Activated B cell treated with CpG ODN at 0.5 μM for 24 hours (primary cell): ENCODE measurements at regions of chr7 and their contacts with region 1.

Region 1: DNA sequence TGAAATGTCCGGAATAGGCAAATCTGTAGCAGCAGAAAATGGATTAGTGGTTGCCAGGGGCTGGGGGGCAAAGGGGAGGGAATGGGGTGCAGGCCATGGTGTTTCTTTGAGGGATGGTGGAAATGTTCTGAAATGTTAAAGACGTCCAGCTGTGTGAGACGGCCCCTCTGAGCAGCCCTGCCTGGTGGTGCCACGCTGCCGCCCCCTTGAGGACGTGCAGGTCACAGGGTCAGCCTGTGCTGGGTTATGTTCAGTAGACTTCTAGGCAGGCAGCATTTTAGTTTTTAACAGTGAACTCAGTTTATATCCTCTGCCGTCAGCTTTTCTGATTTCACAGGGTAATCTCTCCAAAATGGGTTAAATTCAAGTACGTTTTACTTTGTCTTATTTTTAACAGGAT is 9.4 kb downstream of the NUB1 start:
- DNase-seq: peak; percentile 35
- ATAC-seq: peak; percentile 13
- H3K4me3 Mint-ChIP-seq: no peak overlapping the region
- H3K27ac Mint-ChIP-seq: peak overlapping the region; percentile 94
- H3K4me1 Mint-ChIP-seq: peaks cover 51% of the 10 kb centered on the region
- H3K27me3 Mint-ChIP-seq: no peaks in the 10 kb centered on the region
- CTCF ChIP-seq: no peak

Region 2: DNA sequence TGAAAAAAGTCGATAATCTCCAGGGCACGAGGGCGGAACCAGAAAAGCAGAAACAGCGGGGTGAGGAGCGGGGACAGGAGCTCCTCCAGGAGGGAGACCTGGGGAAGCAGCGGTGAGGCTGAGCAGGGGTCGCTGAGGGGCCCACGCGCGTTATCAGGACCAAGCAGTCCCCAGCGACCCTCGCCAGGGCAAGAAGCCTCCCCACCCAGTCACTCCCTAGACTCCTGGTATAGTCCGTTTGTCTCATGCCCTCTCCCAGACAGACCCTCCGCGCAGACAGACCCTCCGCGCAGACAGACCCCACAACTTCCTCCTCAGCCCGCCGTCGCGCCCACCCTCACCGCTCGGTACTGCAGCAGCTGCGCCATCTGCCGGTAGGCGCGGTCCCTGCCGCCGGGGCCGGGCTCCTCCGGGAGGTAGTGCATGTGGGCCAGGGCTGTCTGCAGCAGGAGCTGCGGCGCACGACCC is 333.0 kb before region 1 on chr7:
- CTCF ChIA-PET with region 1: no interaction called
- POLR2A ChIA-PET with region 1: no interaction called
- intact Hi-C with region 1: loop called (anchors 5 kb)
- DNase-seq: peak; percentile 83
- ATAC-seq: peak; percentile 72
- H3K4me3 Mint-ChIP-seq: peak overlapping the region; percentile 85
- H3K27ac Mint-ChIP-seq: no peak overlapping the region
- H3K4me1 Mint-ChIP-seq: peaks cover 45% of the 10 kb centered on the region
- H3K27me3 Mint-ChIP-seq: peaks cover 32% of the 10 kb centered on the region
- CTCF ChIP-seq: peak; percentile 78

Region 3: DNA sequence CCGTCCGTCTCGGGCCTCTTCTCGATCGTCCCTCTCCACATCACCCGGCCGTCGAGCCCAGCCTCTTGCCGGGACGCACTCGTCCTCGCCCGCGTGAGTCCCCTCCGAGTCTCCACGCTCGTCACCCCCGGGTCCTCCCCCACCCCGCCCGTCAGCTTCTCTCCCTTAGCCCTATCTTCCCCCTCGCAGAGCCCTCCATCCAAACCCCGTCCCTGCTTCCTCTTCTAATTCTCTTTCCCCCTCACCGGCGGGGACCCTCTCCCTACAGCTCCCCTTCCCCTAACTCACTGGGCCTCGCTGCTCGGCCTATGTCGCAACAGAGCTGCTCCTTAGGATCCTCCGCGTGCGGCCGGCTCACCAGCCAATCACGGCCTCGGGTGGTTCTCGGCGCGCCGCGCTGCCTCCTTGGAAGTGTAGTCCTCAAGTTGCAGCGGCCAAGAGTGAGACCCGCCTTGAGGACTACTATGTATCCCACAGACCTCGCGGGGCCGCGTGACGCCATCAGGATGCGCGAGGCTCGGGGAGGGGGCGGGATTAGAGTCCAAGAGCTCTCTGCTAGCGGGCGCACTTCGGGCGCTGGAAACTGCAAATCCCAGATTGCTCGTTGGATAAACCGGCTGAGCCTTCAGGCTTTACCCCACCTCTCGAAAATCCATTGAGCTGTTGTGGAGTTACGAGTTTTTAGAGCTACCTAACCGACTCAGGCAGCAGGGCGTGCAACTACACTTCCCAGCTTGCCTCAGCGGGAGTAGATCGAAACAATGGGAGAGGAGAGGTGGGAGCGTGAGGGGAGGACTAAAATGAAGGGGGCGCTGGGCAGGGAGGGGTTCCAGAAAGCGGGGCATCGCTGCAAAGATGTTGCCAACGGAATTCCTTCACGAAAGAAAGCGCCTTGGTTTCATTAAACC is 123.9 kb before region 1 on chr7 and contains the start of gene ABCF2:
- CTCF ChIA-PET with region 1: no interaction called
- POLR2A ChIA-PET with region 1: interaction called, 3 read pairs
- intact Hi-C with region 1: loop called (anchors 1 kb)
- DNase-seq: peak; percentile 97
- ATAC-seq: peak; percentile 99
- H3K4me3 Mint-ChIP-seq: peak within 1 kb of the TSS; percentile 99
- H3K27ac Mint-ChIP-seq: peak within 1 kb of the TSS; percentile 91
- H3K4me1 Mint-ChIP-seq: peaks cover 41% of the 10 kb centered on the region
- H3K27me3 Mint-ChIP-seq: no peaks in the 10 kb centered on the region
- CTCF ChIP-seq: no peak
- total RNA-seq, gene ABCF2: 47.3 and 52.4 TPM in 2 replicates

Region 4: GRCh38 chr7:151315038-151315655 is 35.9 kb before region 1 on chr7:
- CTCF ChIA-PET with region 1: interaction called, 205 read pairs
- POLR2A ChIA-PET with region 1: interaction called, 25 read pairs
- intact Hi-C with region 1: loop called (anchors 1 kb)
- DNase-seq: peak; percentile 41
- ATAC-seq: peak; percentile 87
- H3K4me3 Mint-ChIP-seq: no peak overlapping the region
- H3K27ac Mint-ChIP-seq: no peak overlapping the region
- H3K4me1 Mint-ChIP-seq: peaks cover 2% of the 10 kb centered on the region
- H3K27me3 Mint-ChIP-seq: no peaks in the 10 kb centered on the region
- CTCF ChIP-seq: no peak

Region 5: GRCh38 chr7:151368136-151368571 is 17.1 kb after region 1 on chr7:
- CTCF ChIA-PET with region 1: interaction called, 24 read pairs
- POLR2A ChIA-PET with region 1: interaction called, 3 read pairs
- intact Hi-C with region 1: loop called (anchors 1 kb)
- DNase-seq: peak; percentile 64
- ATAC-seq: peak; percentile 100
- H3K4me3 Mint-ChIP-seq: no peak overlapping the region
- H3K27ac Mint-ChIP-seq: no peak overlapping the region
- H3K4me1 Mint-ChIP-seq: peaks cover 6% of the 10 kb centered on the region
- H3K27me3 Mint-ChIP-seq: no peaks in the 10 kb centered on the region
- CTCF ChIP-seq: peak; percentile 37

Region 6: GRCh38 chr7:151400626-151401315 is 49.7 kb after region 1 on chr7:
- CTCF ChIA-PET with region 1: no interaction called
- POLR2A ChIA-PET with region 1: no interaction called
- intact Hi-C with region 1: loop called (anchors 1 kb)
- DNase-seq: peak; percentile 55
- ATAC-seq: peak; percentile 96
- H3K4me3 Mint-ChIP-seq: peak overlapping the region; percentile 36
- H3K27ac Mint-ChIP-seq: peak overlapping the region; percentile 81
- H3K4me1 Mint-ChIP-seq: peaks cover 26% of the 10 kb centered on the region
- H3K27me3 Mint-ChIP-seq: no peaks in the 10 kb centered on the region
- CTCF ChIP-seq: no peak

Region 7: GRCh38 chr7:151411551-151411950 is 60.5 kb after region 1 on chr7:
- CTCF ChIA-PET with region 1: no interaction called
- POLR2A ChIA-PET with region 1: no interaction called
- intact Hi-C with region 1: no loop called
- DNase-seq: no peak
- ATAC-seq: peak; percentile 49
- H3K4me3 Mint-ChIP-seq: peak overlapping the region; percentile 41
- H3K27ac Mint-ChIP-seq: no peak overlapping the region
- H3K4me1 Mint-ChIP-seq: peaks cover 25% of the 10 kb centered on the region
- H3K27me3 Mint-ChIP-seq: peaks cover 46% of the 10 kb centered on the region
- CTCF ChIP-seq: no peak

Region 8: DNA sequence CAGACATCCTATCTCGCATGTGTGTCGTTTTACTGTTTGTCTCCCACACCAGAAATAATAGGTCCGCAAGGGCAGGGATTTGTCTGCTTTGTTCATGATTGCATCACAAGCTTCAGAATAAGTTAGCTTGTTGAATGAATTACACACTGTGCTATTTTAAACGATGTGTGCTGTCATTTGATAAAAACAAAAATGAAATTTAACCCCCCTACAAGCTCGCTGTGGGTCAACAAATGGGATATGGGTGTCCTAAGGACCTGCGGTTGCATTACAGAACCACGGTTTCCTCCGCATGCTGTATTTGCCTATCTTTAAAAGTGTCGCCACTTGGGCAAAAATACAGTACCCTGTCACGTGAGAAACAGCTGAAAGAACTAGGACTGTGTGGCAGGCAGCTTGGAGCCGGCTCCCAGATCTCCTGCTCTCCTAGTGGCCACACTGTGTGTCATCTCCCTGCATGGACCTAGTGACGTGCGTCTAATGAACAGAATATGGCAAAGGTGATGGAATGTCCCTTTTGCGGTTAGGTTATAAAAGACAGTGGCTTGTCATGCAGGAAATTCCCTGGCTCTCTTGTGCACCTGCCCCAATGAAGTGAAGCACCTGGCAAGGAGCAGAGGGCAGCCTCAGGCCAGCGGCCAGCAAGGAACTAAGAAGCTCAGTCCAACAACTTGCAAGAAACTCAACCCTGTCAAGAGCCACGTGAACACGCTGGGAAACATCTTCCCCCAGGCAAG is 121.8 kb after region 1 on chr7:
- CTCF ChIA-PET with region 1: no interaction called
- POLR2A ChIA-PET with region 1: no interaction called
- intact Hi-C with region 1: no loop called
- DNase-seq: no peak
- ATAC-seq: peak; percentile 38
- H3K4me3 Mint-ChIP-seq: peak overlapping the region; percentile 62
- H3K27ac Mint-ChIP-seq: peak overlapping the region; percentile 57
- H3K4me1 Mint-ChIP-seq: peaks cover 27% of the 10 kb centered on the region
- H3K27me3 Mint-ChIP-seq: no peaks in the 10 kb centered on the region
- CTCF ChIP-seq: no peak

Region 9: DNA sequence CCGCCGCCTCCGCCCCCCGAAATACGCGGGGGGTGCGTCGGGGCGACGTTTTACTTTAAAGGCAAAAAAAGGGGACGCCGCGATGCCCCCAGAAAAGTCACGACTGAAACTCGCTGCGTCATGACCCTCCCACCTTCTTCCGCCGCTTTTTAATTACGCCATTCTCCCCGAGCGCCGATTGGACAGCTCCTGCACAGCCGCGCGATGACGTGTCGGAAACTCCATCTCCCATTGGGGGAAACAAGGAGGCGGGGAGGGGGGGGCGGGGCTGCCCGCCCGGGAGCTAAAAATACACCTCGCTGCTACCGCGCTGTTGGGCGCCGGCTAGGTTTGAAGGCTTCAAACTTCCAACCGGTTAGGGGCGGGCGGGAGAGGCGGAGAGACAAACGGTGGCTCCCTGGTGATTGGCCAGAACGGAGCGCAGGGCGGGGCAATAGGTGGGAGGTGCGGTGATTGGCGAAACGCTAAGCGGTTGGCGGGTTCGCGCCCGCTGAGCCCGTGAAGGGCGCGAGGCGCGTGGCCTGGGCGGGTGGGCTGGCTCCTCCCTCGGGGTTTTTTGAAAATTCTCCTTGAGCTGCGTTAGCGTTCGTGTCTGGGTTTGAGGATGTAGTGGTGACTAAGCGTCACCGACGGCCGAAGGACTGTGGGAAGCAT is 168.9 kb after region 1 on chr7 and contains the start of gene RHEB:
- CTCF ChIA-PET with region 1: no interaction called
- POLR2A ChIA-PET with region 1: no interaction called
- intact Hi-C with region 1: loop called (anchors 1 kb)
- DNase-seq: peak; percentile 94
- ATAC-seq: peak; percentile 86
- H3K4me3 Mint-ChIP-seq: peak within 1 kb of the TSS; percentile 94
- H3K27ac Mint-ChIP-seq: peak within 1 kb of the TSS; percentile 98
- H3K4me1 Mint-ChIP-seq: peaks cover 39% of the 10 kb centered on the region
- H3K27me3 Mint-ChIP-seq: no peaks in the 10 kb centered on the region
- CTCF ChIP-seq: no peak
- total RNA-seq, gene RHEB: 30.5 and 32.8 TPM in 2 replicates

Region 10: GRCh38 chr7:151838861-151839391 is 487.9 kb after region 1 on chr7:
- CTCF ChIA-PET with region 1: no interaction called
- POLR2A ChIA-PET with region 1: no interaction called
- intact Hi-C with region 1: no loop called
- DNase-seq: peak; percentile 49
- ATAC-seq: peak; percentile 80
- H3K4me3 Mint-ChIP-seq: peak overlapping the region; percentile 81
- H3K27ac Mint-ChIP-seq: peak overlapping the region; percentile 90
- H3K4me1 Mint-ChIP-seq: peaks cover 39% of the 10 kb centered on the region
- H3K27me3 Mint-ChIP-seq: no peaks in the 10 kb centered on the region
- CTCF ChIP-seq: no peak